CD8-positive, alpha-beta T cell (primary cell): ENCODE measurements at regions of chr3 and their contacts with region 1.

Region 1: GRCh38 chr3:45656575-45657363 is 32.4 kb upstream of the SACM1L start:
- DNase-seq: peak; percentile 73 to 90 (median 87)
- ATAC-seq: peak; percentile 94
- H3K4me3 ChIP-seq: no peak overlapping the region
- H3K4me3 Mint-ChIP-seq: no peak overlapping the region
- H3K27ac ChIP-seq: no peak overlapping the region
- H3K27ac Mint-ChIP-seq: no peak overlapping the region
- H3K4me1 ChIP-seq: no peaks in the 10 kb centered on the region
- H3K4me1 Mint-ChIP-seq: peaks cover 14% of the 10 kb centered on the region
- H3K27me3 ChIP-seq: no peaks in the 10 kb centered on the region
- H3K27me3 Mint-ChIP-seq: no peaks in the 10 kb centered on the region
- CTCF ChIP-seq: peak; percentile 77

Region 2: DNA sequence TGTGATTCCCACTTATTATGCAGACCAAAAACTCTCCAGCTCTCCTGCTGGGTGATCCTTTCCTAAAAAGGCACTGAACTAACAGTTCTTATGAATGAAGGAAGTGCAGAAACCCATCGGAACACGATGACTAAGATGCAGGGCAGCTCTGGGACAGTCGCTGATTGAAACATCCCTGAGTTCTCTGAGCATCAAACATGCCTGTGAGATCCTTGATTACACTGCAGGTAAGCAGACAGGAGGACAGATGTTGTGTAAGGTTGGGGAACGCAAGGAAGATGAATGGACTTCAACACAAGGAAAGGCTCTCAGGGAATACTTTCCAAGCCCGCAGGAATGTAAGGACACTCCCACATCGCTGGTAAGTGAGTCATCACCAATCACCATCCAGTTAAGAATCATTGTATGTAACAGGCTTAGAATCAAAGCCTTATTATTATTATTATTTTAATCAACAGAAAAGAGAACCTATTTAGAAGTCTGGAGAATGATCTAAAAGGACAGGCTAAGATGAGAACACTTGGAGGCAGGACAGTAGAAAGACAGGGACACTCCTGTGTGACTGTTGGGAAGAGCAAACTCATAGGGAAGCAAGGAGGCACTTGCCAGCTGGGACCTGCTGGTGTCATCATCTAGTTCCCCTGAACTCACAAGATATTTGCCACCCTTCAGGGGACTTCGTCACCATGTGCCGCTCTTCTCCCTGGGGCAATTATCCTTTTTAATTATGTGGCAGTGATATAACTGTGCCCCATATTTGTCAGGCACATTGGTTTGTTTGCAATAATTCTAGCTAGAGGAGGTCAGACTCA is 456.7 kb before region 1 on chr3:
- CTCF ChIA-PET with region 1: no interaction called
- POLR2A ChIA-PET with region 1: no interaction called
- intact Hi-C with region 1: loop called in 1 of 2 experiments (anchors 10 kb)
- DNase-seq: no peak
- ATAC-seq: no peak
- H3K4me3 ChIP-seq: no peak overlapping the region
- H3K4me3 Mint-ChIP-seq: no peak overlapping the region
- H3K27ac ChIP-seq: no peak overlapping the region
- H3K27ac Mint-ChIP-seq: no peak overlapping the region
- H3K4me1 ChIP-seq: no peaks in the 10 kb centered on the region
- H3K4me1 Mint-ChIP-seq: no peaks in the 10 kb centered on the region
- H3K27me3 ChIP-seq: peaks cover 0 to 3% of the 10 kb centered on the region in 2 experiments
- H3K27me3 Mint-ChIP-seq: peaks cover 19% of the 10 kb centered on the region
- CTCF ChIP-seq: no peak

Region 3: GRCh38 chr3:45528429-45528828 is 128.3 kb before region 1 on chr3:
- CTCF ChIA-PET with region 1: interaction called, 12 read pairs
- POLR2A ChIA-PET with region 1: no interaction called
- intact Hi-C with region 1: no loop called
- DNase-seq: no peak
- ATAC-seq: no peak
- H3K4me3 ChIP-seq: no peak overlapping the region
- H3K4me3 Mint-ChIP-seq: no peak overlapping the region
- H3K27ac ChIP-seq: no peak overlapping the region
- H3K27ac Mint-ChIP-seq: no peak overlapping the region
- H3K4me1 ChIP-seq: no peaks in the 10 kb centered on the region
- H3K4me1 Mint-ChIP-seq: no peaks in the 10 kb centered on the region
- H3K27me3 ChIP-seq: no peaks in the 10 kb centered on the region
- H3K27me3 Mint-ChIP-seq: no peaks in the 10 kb centered on the region
- CTCF ChIP-seq: no peak

Region 4: GRCh38 chr3:45593708-45594609 is 62.8 kb before region 1 on chr3:
- CTCF ChIA-PET with region 1: interaction called, 16 read pairs
- POLR2A ChIA-PET with region 1: interaction called, 3 read pairs
- intact Hi-C with region 1: loop called (anchors 1 kb)
- DNase-seq: peak; percentile 35 to 84 (median 64)
- ATAC-seq: peak; percentile 80
- H3K4me3 ChIP-seq: peak overlapping the region; percentile 62 to 93
- H3K4me3 Mint-ChIP-seq: peak overlapping the region; percentile 89
- H3K27ac ChIP-seq: peak overlapping the region; percentile 62 to 67
- H3K27ac Mint-ChIP-seq: peak overlapping the region; percentile 88
- H3K4me1 ChIP-seq: peaks cover 57% of the 10 kb centered on the region
- H3K4me1 Mint-ChIP-seq: peaks cover 58% of the 10 kb centered on the region
- H3K27me3 ChIP-seq: no peaks in the 10 kb centered on the region
- H3K27me3 Mint-ChIP-seq: no peaks in the 10 kb centered on the region
- CTCF ChIP-seq: no peak

Region 5: GRCh38 chr3:45642731-45643152 is 14.0 kb before region 1 on chr3:
- CTCF ChIA-PET with region 1: interaction called, 13 read pairs
- POLR2A ChIA-PET with region 1: no interaction called
- intact Hi-C with region 1: no loop called
- DNase-seq: no peak
- ATAC-seq: no peak
- H3K4me3 ChIP-seq: no peak overlapping the region
- H3K4me3 Mint-ChIP-seq: no peak overlapping the region
- H3K27ac ChIP-seq: no peak overlapping the region
- H3K27ac Mint-ChIP-seq: no peak overlapping the region
- H3K4me1 ChIP-seq: no peaks in the 10 kb centered on the region
- H3K4me1 Mint-ChIP-seq: peaks cover 11% of the 10 kb centered on the region
- H3K27me3 ChIP-seq: no peaks in the 10 kb centered on the region
- H3K27me3 Mint-ChIP-seq: no peaks in the 10 kb centered on the region
- CTCF ChIP-seq: no peak

Region 6: GRCh38 chr3:45677033-45677433 is 20.3 kb after region 1 on chr3:
- CTCF ChIA-PET with region 1: interaction called, 42 read pairs
- POLR2A ChIA-PET with region 1: interaction called, 11 read pairs
- intact Hi-C with region 1: no loop called
- DNase-seq: peak; percentile 34 to 86 (median 70)
- ATAC-seq: peak; percentile 100
- H3K4me3 ChIP-seq: peak overlapping the region; percentile 29 to 45
- H3K4me3 Mint-ChIP-seq: peak overlapping the region; percentile 77
- H3K27ac ChIP-seq: peak overlapping the region; percentile 53 to 83
- H3K27ac Mint-ChIP-seq: peak overlapping the region; percentile 96
- H3K4me1 ChIP-seq: peaks cover 22% of the 10 kb centered on the region
- H3K4me1 Mint-ChIP-seq: peaks cover 28% of the 10 kb centered on the region
- H3K27me3 ChIP-seq: no peaks in the 10 kb centered on the region
- H3K27me3 Mint-ChIP-seq: no peaks in the 10 kb centered on the region
- CTCF ChIP-seq: no peak

Region 7: DNA sequence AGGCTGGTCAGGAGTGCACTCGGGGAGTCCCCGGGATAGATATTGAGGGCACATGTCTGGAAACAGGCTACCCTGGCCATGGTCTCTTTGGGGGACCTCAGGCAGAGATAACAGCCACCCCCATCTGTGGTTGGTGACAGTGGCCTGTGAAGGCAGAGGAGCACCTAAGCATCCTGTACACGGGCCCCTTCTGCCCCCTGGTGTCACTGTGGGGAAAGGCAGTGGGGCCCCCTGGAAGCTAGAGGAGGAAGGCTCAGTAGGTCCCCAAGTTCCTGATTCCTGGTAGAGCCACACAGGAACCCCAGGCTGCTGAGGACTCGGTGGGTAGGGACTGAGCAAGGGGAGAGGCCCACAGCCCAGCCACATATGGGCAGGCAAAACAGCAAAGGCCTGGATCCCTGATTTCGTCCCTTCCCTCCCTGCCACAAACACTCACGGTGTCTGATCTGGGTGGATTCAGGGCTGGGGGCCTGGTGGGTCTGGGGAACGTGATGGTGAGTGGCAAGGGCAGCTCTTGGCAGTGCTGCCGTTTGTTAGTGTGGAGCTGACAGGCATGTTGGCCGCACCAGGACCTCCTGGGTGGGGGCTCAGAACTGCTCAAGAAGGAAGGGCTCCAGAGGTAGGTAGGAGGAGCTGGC is 272.4 kb after region 1 on chr3:
- CTCF ChIA-PET with region 1: interaction called, 18 read pairs
- POLR2A ChIA-PET with region 1: no interaction called
- intact Hi-C with region 1: no loop called
- DNase-seq: peak; percentile 39 to 78 (median 66)
- ATAC-seq: peak; percentile 97
- H3K4me3 ChIP-seq: no peak overlapping the region
- H3K4me3 Mint-ChIP-seq: no peak overlapping the region
- H3K27ac ChIP-seq: no peak overlapping the region
- H3K27ac Mint-ChIP-seq: peak overlapping the region; percentile 63
- H3K4me1 ChIP-seq: no peaks in the 10 kb centered on the region
- H3K4me1 Mint-ChIP-seq: peaks cover 4% of the 10 kb centered on the region
- H3K27me3 ChIP-seq: no peaks in the 10 kb centered on the region
- H3K27me3 Mint-ChIP-seq: no peaks in the 10 kb centered on the region
- CTCF ChIP-seq: peak; percentile 72